HepG2 (cell line): ENCODE measurements at regions of chr5 and their contacts with region 1.

Region 1: GRCh38 chr5:34656001-34656699 is at the start of gene RAI14:
- DNase-seq: peak; percentile 41
- ATAC-seq: peak; percentile 85
- H3K4me3 ChIP-seq: peak within 1 kb of the TSS; percentile 85 to 88 (median 87)
- H3K27ac ChIP-seq: peak within 1 kb of the TSS; percentile 44
- H3K4me1 ChIP-seq: peaks cover 25% of the 10 kb centered on the region
- H3K27me3 ChIP-seq: peaks cover 1 to 4% of the 10 kb centered on the region in 2 experiments; a peak in 3 of 5 replicates
- CTCF ChIP-seq: peak; percentile 45; the same call in 1 of the 2 replicates
- EP300 ChIP-seq: no peak
- POLR2A ChIP-seq: peak in 1 of 2 experiments; percentile 37; a peak in 1 of 4 replicates
- RAD21 ChIP-seq: peak; percentile 74
- total RNA-seq, gene RAI14: 18.2 and 26.6 TPM in 2 replicates

Region 2: DNA sequence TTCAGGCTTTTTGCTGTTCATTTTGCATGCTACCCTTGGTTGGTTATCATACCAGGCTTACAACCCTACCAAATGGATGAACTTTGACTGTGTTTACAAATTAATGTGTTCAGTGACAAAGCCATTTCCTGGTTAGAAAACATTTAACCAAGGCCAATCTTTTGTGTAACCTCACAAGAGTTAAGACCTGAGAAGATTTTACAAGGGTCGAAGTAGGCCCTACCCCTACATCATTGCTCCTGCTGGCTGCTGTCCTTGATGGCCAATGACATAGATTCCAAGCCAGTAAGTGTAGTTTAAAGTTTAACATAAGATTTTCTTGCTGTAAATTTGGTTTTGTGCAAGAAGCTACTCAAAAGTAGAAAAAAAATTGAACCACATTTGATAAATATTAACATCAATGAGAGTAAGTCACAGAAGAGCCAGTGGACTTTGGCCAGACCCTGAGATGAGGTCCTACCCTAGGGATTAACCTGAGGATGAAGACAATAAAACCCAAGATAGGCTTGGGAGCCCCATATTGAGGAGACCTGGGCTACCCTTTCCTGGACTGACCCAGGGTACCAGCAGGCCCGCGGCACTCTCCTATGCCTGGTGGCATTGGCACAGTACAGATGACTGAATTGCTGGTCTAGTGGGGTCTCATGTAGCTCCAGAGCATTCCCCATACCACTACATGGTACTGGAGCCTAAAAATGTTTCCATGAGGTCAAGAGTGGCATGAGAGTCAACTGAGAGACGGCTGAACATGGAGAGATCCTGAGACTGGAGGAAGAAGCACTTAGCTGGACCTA is 621.4 kb before region 1 on chr5:
- CTCF ChIA-PET with region 1: no interaction called
- POLR2A ChIA-PET with region 1: no interaction called
- in situ Hi-C with region 1: no loop called
- intact Hi-C with region 1: no loop called
- DNase-seq: peak; percentile 53
- ATAC-seq: peak; percentile 77
- H3K4me3 ChIP-seq: no peak overlapping the region
- H3K27ac ChIP-seq: peak overlapping the region; percentile 74
- H3K4me1 ChIP-seq: peaks cover 73% of the 10 kb centered on the region
- H3K27me3 ChIP-seq: no peaks in the 10 kb centered on the region
- CTCF ChIP-seq: no peak
- EP300 ChIP-seq: peak in 1 of 2 experiments; percentile 50; a peak in 1 of 4 replicates
- POLR2A ChIP-seq: no peak
- RAD21 ChIP-seq: no peak

Region 3: GRCh38 chr5:34756781-34757624 is 100.9 kb after region 1 on chr5:
- CTCF ChIA-PET with region 1: no interaction called
- POLR2A ChIA-PET with region 1: no interaction called
- in situ Hi-C with region 1: no loop called
- intact Hi-C with region 1: loop called (anchors 5 kb)
- DNase-seq: peak; percentile 83
- ATAC-seq: peak; percentile 97
- H3K4me3 ChIP-seq: peak overlapping the region; percentile 33 to 46 (median 44); a peak in 5 of 6 replicates
- H3K27ac ChIP-seq: peak overlapping the region; percentile 78
- H3K4me1 ChIP-seq: peaks cover 48% of the 10 kb centered on the region
- H3K27me3 ChIP-seq: no peaks in the 10 kb centered on the region
- CTCF ChIP-seq: no peak
- EP300 ChIP-seq: peak in 1 of 2 experiments; percentile 62; a peak in 2 of 4 replicates
- POLR2A ChIP-seq: no peak
- RAD21 ChIP-seq: no peak

Region 4: GRCh38 chr5:34838785-34839714 is 182.9 kb after region 1 on chr5 and contains the start of gene TTC23L:
- CTCF ChIA-PET with region 1: no interaction called
- POLR2A ChIA-PET with region 1: interaction called, 9 read pairs
- in situ Hi-C with region 1: no loop called
- intact Hi-C with region 1: loop called (anchors 1 kb)
- DNase-seq: peak; percentile 96
- ATAC-seq: peak; percentile 97
- H3K4me3 ChIP-seq: peak within 1 kb of the TSS; percentile 67 to 76 (median 74)
- H3K27ac ChIP-seq: peak within 1 kb of the TSS; percentile 84
- H3K4me1 ChIP-seq: peaks cover 23% of the 10 kb centered on the region
- H3K27me3 ChIP-seq: no peaks in the 10 kb centered on the region
- CTCF ChIP-seq: peak; percentile 41
- EP300 ChIP-seq: peak; percentile 42 to 48; a peak in 3 of 4 replicates
- POLR2A ChIP-seq: peak; percentile 94 to 96
- RAD21 ChIP-seq: peak; percentile 66; the same call in 1 of the 2 replicates
- total RNA-seq, gene TTC23L: 1.1 and 1.4 TPM in 2 replicates

Region 5: DNA sequence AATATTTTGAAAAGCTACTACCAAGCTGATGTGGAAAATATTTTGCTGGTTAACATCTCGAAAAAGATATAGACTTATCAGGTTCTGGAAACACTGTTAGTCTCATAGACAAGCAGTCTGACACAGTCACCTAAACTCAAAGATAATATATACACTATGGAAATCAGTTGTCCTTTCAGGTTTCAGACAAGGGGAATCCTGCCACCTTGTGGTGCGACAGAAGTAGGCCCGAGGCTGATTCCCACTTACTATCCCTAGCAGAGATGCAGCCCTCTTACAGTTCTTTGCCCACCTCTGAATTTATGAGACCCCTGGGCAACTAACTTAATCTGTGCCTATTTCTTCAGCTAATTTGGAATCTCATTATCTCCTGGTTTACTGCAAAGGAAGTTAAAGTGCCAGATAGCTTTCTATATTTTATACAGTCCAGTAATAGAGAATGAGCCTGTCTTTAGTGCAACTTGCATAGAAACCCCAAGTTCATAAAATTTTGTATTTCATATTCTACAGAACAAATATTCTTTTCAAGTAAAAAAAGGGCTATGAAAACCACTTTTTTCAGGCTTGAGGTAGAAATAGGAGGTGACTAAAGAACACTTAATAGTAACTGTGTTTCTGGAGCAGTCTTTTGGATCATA is 242.2 kb after region 1 on chr5:
- CTCF ChIA-PET with region 1: no interaction called
- POLR2A ChIA-PET with region 1: no interaction called
- in situ Hi-C with region 1: no loop called
- intact Hi-C with region 1: loop called (anchors 2 kb)
- DNase-seq: peak; percentile 56
- ATAC-seq: peak; percentile 95
- H3K4me3 ChIP-seq: no peak overlapping the region
- H3K27ac ChIP-seq: no peak overlapping the region
- H3K4me1 ChIP-seq: peaks cover 6% of the 10 kb centered on the region
- H3K27me3 ChIP-seq: no peaks in the 10 kb centered on the region
- CTCF ChIP-seq: peak; percentile 88
- EP300 ChIP-seq: no peak
- POLR2A ChIP-seq: no peak
- RAD21 ChIP-seq: peak; percentile 88

Region 6: DNA sequence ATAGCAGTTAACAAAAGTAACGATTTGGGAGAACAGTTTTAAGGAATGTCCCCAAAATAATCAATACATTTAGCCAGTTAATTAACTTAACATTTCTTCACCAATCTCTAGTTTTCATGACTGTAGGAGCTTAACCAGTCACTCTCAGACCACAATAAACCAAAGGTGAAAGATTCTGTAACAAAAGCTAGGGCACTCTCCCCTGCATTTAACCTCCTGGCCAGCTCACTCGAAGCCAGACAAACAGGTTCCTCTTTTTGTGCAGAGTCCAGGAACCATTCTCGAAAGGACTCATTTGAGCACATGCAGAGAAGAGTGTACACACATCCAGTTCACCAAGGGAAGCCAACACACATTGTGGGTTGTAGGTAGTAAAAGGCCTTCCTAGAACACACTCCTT is 1207.0 kb after region 1 on chr5:
- CTCF ChIA-PET with region 1: no interaction called
- POLR2A ChIA-PET with region 1: no interaction called
- in situ Hi-C with region 1: no loop called
- intact Hi-C with region 1: no loop called
- DNase-seq: no peak
- ATAC-seq: no peak
- H3K4me3 ChIP-seq: no peak overlapping the region
- H3K27ac ChIP-seq: no peak overlapping the region
- H3K4me1 ChIP-seq: no peaks in the 10 kb centered on the region
- H3K27me3 ChIP-seq: no peaks in the 10 kb centered on the region
- CTCF ChIP-seq: no peak
- EP300 ChIP-seq: no peak
- POLR2A ChIP-seq: no peak
- RAD21 ChIP-seq: no peak